Activated naive CD4-positive, alpha-beta T cell treated with anti-CD3 and anti-CD28 coated beads for 36 hours (primary cell): ENCODE measurements at regions of chr3 and their contacts with region 1.

Region 1: GRCh38 chr3:107235928-107236315 is 141.3 kb upstream of the CCDC54 start:
- DNase-seq: peak; percentile 68
- H3K4me3 Mint-ChIP-seq: peak overlapping the region; percentile 47
- H3K27ac Mint-ChIP-seq: no peak overlapping the region
- H3K4me1 Mint-ChIP-seq: peaks cover 8% of the 10 kb centered on the region
- H3K27me3 Mint-ChIP-seq: peaks cover 8% of the 10 kb centered on the region

Region 2: GRCh38 chr3:107421170-107421792 is 185.4 kb after region 1 on chr3:
- CTCF ChIA-PET with region 1: interaction called, 54 read pairs
- intact Hi-C with region 1: loop called (anchors 1 kb)
- DNase-seq: peak; percentile 25
- H3K4me3 Mint-ChIP-seq: no peak overlapping the region
- H3K27ac Mint-ChIP-seq: no peak overlapping the region
- H3K4me1 Mint-ChIP-seq: peaks cover 3% of the 10 kb centered on the region
- H3K27me3 Mint-ChIP-seq: no peaks in the 10 kb centered on the region

Region 3: DNA sequence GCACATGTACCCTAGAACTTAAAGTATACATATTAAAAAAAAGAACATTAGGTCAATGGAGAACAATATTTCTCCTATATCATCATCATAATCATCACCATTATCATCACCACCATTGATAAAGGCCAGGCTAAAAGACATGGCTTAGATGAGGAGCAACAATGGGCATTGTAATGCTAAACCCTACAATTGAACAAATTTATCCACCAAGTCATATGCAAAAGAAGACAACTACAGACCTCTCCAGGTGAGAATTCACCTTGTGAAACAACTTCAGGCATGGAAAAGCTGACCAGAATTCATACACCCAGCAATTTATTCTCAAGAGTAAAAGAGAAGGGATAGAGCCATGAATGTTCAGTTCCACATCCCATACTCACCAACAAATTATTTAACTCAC is 240.5 kb after region 1 on chr3:
- CTCF ChIA-PET with region 1: no interaction called
- intact Hi-C with region 1: no loop called
- DNase-seq: no peak
- H3K4me3 Mint-ChIP-seq: no peak overlapping the region
- H3K27ac Mint-ChIP-seq: no peak overlapping the region
- H3K4me1 Mint-ChIP-seq: no peaks in the 10 kb centered on the region
- H3K27me3 Mint-ChIP-seq: peaks cover 4% of the 10 kb centered on the region

Region 4: DNA sequence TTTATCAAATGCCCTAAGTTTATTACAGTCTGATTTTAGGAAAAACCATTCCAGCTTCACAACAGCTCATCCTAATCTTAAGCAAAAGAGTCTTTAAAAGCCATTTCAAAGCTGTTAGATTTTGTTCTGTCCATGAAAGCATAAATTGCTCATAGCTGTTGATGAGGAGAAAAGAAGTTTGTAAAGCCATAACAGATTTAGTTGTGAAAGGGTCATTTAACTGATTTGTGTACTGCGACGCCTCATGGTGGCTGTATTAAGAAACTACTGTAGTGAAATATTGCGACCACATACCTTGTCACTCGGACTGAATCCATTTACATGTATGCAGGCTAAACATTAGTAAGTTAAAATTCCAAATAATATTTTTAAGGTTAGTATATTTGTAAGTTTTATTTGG is 307.7 kb after region 1 on chr3:
- CTCF ChIA-PET with region 1: no interaction called
- intact Hi-C with region 1: loop called (anchors 2 kb)
- DNase-seq: peak; percentile 13
- H3K4me3 Mint-ChIP-seq: no peak overlapping the region
- H3K27ac Mint-ChIP-seq: no peak overlapping the region
- H3K4me1 Mint-ChIP-seq: peaks cover 17% of the 10 kb centered on the region
- H3K27me3 Mint-ChIP-seq: no peaks in the 10 kb centered on the region

Region 5: GRCh38 chr3:107676469-107677309 is 440.8 kb after region 1 on chr3:
- CTCF ChIA-PET with region 1: interaction called, 3 read pairs
- intact Hi-C with region 1: loop called (anchors 5 kb)
- DNase-seq: no peak
- H3K4me3 Mint-ChIP-seq: no peak overlapping the region
- H3K27ac Mint-ChIP-seq: no peak overlapping the region
- H3K4me1 Mint-ChIP-seq: peaks cover 32% of the 10 kb centered on the region
- H3K27me3 Mint-ChIP-seq: no peaks in the 10 kb centered on the region

Region 6: GRCh38 chr3:107927361-107928083 is 691.6 kb after region 1 on chr3:
- CTCF ChIA-PET with region 1: interaction called, 5 read pairs
- intact Hi-C with region 1: loop called (anchors 5 kb)
- DNase-seq: peak; percentile 74
- H3K4me3 Mint-ChIP-seq: peak overlapping the region; percentile 70
- H3K27ac Mint-ChIP-seq: no peak overlapping the region
- H3K4me1 Mint-ChIP-seq: peaks cover 7% of the 10 kb centered on the region
- H3K27me3 Mint-ChIP-seq: peaks cover 11% of the 10 kb centered on the region